HCT116 (cell line): ENCODE measurements at regions of chr2 and their contacts with region 1.

Region 1: GRCh38 chr2:33412920-33413319 is 63.5 kb upstream of the RASGRP3 start:
- DNase-seq: peak; percentile 18
- ATAC-seq: peak; percentile 69
- H3K4me3 ChIP-seq: no peak overlapping the region
- H3K27ac ChIP-seq: no peak overlapping the region
- H3K4me1 ChIP-seq: no peaks in the 10 kb centered on the region
- H3K27me3 ChIP-seq: no peaks in the 10 kb centered on the region
- CTCF ChIP-seq: peak; percentile 33 to 49 (median 46); a peak in 4 of 6 replicates
- POLR2A ChIP-seq: no peak
- RAD21 ChIP-seq: peak; percentile 70

Region 2: DNA sequence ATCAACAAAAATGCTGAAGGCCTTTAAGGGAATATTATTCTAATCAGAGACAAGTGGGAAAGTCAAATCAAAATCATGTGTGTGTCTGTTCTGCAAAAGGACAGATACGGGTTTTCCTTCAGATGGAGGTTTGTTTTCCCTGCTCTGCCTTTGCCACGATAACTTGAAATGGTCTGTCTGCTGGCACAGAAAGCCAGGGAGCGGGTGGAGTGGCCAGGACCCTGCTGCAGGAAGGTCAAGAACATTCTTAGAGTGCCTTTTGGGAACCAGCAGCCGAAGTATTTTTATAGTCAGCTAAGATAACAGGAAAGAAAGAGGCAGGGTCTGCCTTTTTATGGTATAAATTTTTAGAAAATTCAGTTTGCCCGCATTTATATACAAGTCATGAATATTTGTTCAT is 232.0 kb before region 1 on chr2:
- CTCF ChIA-PET with region 1: no interaction called
- POLR2A ChIA-PET with region 1: no interaction called
- RAD21 ChIA-PET with region 1: no interaction called
- intact Hi-C with region 1: no loop called
- DNase-seq: no peak
- ATAC-seq: no peak
- H3K4me3 ChIP-seq: no peak overlapping the region
- H3K27ac ChIP-seq: no peak overlapping the region
- H3K4me1 ChIP-seq: no peaks in the 10 kb centered on the region
- H3K27me3 ChIP-seq: no peaks in the 10 kb centered on the region
- CTCF ChIP-seq: no peak
- POLR2A ChIP-seq: no peak
- RAD21 ChIP-seq: no peak

Region 3: GRCh38 chr2:33395655-33396249 is 17.2 kb before region 1 on chr2:
- CTCF ChIA-PET with region 1: interaction called, 10 read pairs
- POLR2A ChIA-PET with region 1: no interaction called
- RAD21 ChIA-PET with region 1: no interaction called
- intact Hi-C with region 1: no loop called
- DNase-seq: peak; percentile 28
- ATAC-seq: peak; percentile 75
- H3K4me3 ChIP-seq: no peak overlapping the region
- H3K27ac ChIP-seq: no peak overlapping the region
- H3K4me1 ChIP-seq: no peaks in the 10 kb centered on the region
- H3K27me3 ChIP-seq: no peaks in the 10 kb centered on the region
- CTCF ChIP-seq: peak; percentile 29 to 77 (median 70); a peak in 5 of 6 replicates
- POLR2A ChIP-seq: no peak
- RAD21 ChIP-seq: peak; percentile 62

Region 4: DNA sequence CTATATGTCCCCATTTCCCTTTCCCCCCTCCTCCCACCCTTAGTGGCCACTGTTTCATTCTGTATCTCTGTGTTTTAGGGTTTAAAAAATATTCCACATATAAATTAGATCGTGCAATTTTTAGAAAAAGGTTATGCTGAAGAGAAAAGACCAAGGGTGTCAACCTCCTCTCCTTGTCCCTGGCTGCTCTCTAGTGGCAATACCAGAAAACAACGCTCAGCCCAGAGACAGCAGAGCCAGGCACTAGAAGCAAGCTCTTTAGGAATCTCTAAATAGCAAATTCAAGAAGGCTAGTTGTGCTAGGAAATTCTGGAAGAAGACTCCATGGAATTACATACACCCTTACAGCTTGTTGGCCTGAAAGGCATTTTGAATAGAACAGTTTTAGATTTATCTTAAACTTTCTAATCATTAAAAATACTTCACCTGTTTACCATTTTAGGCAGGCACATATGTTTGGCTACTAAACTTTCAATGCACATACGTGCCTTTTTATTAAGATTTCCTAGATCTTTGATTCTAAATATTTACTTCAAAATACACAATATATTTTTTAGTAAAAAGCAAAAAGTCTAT is 28.4 kb after region 1 on chr2:
- CTCF ChIA-PET with region 1: interaction called, 18 read pairs
- POLR2A ChIA-PET with region 1: no interaction called
- RAD21 ChIA-PET with region 1: interaction called in 1 of 2 experiments, 3 read pairs
- intact Hi-C with region 1: no loop called
- DNase-seq: peak; percentile 34
- ATAC-seq: peak; percentile 98
- H3K4me3 ChIP-seq: no peak overlapping the region
- H3K27ac ChIP-seq: no peak overlapping the region
- H3K4me1 ChIP-seq: no peaks in the 10 kb centered on the region
- H3K27me3 ChIP-seq: no peaks in the 10 kb centered on the region
- CTCF ChIP-seq: peak; percentile 49 to 72 (median 62); a peak in 5 of 6 replicates
- POLR2A ChIP-seq: no peak
- RAD21 ChIP-seq: peak; percentile 75

Region 5: GRCh38 chr2:33660426-33661118 is 247.7 kb after region 1 on chr2:
- CTCF ChIA-PET with region 1: no interaction called
- POLR2A ChIA-PET with region 1: no interaction called
- RAD21 ChIA-PET with region 1: no interaction called
- intact Hi-C with region 1: no loop called
- DNase-seq: no peak
- ATAC-seq: no peak
- H3K4me3 ChIP-seq: no peak overlapping the region
- H3K27ac ChIP-seq: no peak overlapping the region
- H3K4me1 ChIP-seq: no peaks in the 10 kb centered on the region; a peak in 1 of 4 replicates
- H3K27me3 ChIP-seq: no peaks in the 10 kb centered on the region
- CTCF ChIP-seq: no peak
- POLR2A ChIP-seq: no peak
- RAD21 ChIP-seq: no peak